ENCODE measurements at regions of chr6 and their contacts with region 1.

Region 1: DNA sequence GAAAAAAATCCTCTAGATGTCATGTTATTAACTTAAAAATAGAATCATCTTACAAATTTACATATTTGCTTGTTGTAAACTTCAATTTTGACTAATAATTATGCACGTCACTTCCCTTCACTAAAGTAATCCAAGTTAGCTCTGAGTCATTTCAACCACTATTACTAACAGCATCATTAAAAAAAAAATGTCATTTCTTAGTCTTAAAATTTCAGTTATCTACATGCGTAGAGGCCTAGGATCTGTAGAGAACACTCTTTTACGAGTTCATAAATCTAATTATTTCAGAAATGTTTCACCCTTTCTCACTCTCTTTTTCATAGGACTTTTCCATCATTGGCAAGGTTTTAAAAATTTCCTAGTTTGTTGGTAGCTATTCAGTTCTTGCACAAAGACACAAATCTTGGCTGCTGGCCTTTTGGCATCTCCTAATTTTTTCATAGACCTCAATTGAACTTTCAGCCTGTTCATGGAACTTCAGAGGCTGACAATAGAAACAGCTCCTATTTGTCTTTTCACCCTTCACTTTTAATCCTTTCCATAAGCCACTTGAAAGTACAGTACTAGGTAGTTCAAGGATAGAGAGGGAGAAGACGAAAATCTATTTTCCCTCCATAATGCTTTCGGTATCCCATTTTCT is 61.5 kb downstream of the OGFRL1 start:
- DNase-seq: no peak

Region 2: DNA sequence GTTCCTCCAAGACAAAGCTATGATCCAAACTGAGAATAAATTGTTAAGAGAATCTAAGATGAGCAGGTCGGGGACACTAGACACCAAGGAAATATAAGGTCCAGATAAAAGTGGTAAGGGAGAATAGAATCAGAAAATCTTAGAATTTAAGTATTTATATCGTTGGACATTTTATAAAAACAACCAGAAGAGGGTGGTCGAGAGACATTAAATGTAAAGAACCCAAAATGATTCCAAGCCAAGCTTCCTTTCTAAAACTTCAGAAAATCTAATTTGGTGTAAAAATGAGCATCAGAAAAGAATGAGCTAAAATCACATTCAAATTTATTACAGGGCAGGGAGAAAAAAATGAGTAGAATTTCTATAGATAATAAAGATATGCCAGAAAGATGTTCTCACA is 159.3 kb before region 1 on chr6:
- in situ Hi-C with region 1: loop called (anchors 25 kb)
- DNase-seq: peak; percentile 50

Region 3: GRCh38 chr6:71544028-71544427 is 193.9 kb after region 1 on chr6:
- in situ Hi-C with region 1: no loop called
- DNase-seq: no peak